PC-3 (cell line): ENCODE measurements at regions of chr6 and their contacts with region 1.

Region 1: GRCh38 chr6:70686548-70687133 is 19.0 kb downstream of the SMAP1 start:
- DNase-seq: peak; percentile 64
- ATAC-seq: 0 out of 2 replicates have a peak, but pooled peaks have one; percentile 35
- H3K4me3 ChIP-seq: no peak overlapping the region
- H3K27ac ChIP-seq: no peak overlapping the region
- H3K4me1 ChIP-seq: peaks cover 13% of the 10 kb centered on the region
- H3K27me3 ChIP-seq: no peaks in the 10 kb centered on the region
- CTCF ChIP-seq: peak; percentile 72

Region 2: GRCh38 chr6:70221025-70221714 is 465.5 kb before region 1 on chr6:
- CTCF ChIA-PET with region 1: interaction called, 4 read pairs
- POLR2A ChIA-PET with region 1: no interaction called
- intact Hi-C with region 1: loop called (anchors 5 kb)
- DNase-seq: peak; percentile 36
- ATAC-seq: no peak
- H3K4me3 ChIP-seq: no peak overlapping the region
- H3K27ac ChIP-seq: no peak overlapping the region
- H3K4me1 ChIP-seq: no peaks in the 10 kb centered on the region
- H3K27me3 ChIP-seq: peaks cover 15% of the 10 kb centered on the region
- CTCF ChIP-seq: peak; percentile 55

Region 3: GRCh38 chr6:70369332-70369950 is 317.2 kb before region 1 on chr6:
- CTCF ChIA-PET with region 1: no interaction called
- POLR2A ChIA-PET with region 1: no interaction called
- intact Hi-C with region 1: loop called (anchors 5 kb)
- DNase-seq: peak; percentile 76
- ATAC-seq: peak; percentile 67
- H3K4me3 ChIP-seq: no peak overlapping the region
- H3K27ac ChIP-seq: no peak overlapping the region
- H3K4me1 ChIP-seq: peaks cover 8% of the 10 kb centered on the region; the same call in 1 of the 2 replicates
- H3K27me3 ChIP-seq: peaks cover 38% of the 10 kb centered on the region
- CTCF ChIP-seq: peak; percentile 85

Region 4: GRCh38 chr6:70520575-70520974 is 166.1 kb before region 1 on chr6:
- CTCF ChIA-PET with region 1: interaction called, 8 read pairs
- POLR2A ChIA-PET with region 1: no interaction called
- intact Hi-C with region 1: loop called (anchors 1 kb)
- DNase-seq: peak; percentile 22
- ATAC-seq: peak; percentile 29; the same call in 1 of the 2 replicates
- H3K4me3 ChIP-seq: no peak overlapping the region
- H3K27ac ChIP-seq: no peak overlapping the region
- H3K4me1 ChIP-seq: no peaks in the 10 kb centered on the region
- H3K27me3 ChIP-seq: no peaks in the 10 kb centered on the region
- CTCF ChIP-seq: peak; percentile 55

Region 5: GRCh38 chr6:70566751-70567382 is 119.8 kb before region 1 on chr6 and contains the start of gene SDHAF4:
- CTCF ChIA-PET with region 1: no interaction called
- POLR2A ChIA-PET with region 1: no interaction called
- intact Hi-C with region 1: loop called (anchors 5 kb)
- DNase-seq: peak; percentile 84
- ATAC-seq: peak; percentile 96
- H3K4me3 ChIP-seq: peak within 1 kb of the TSS; percentile 85
- H3K27ac ChIP-seq: peak within 1 kb of the TSS; percentile 43
- H3K4me1 ChIP-seq: peaks cover 8% of the 10 kb centered on the region; the same call in 1 of the 2 replicates
- H3K27me3 ChIP-seq: no peaks in the 10 kb centered on the region
- CTCF ChIP-seq: no peak
- total RNA-seq, gene SDHAF4: 1.5 and 6.2 TPM in 2 replicates

Region 6: DNA sequence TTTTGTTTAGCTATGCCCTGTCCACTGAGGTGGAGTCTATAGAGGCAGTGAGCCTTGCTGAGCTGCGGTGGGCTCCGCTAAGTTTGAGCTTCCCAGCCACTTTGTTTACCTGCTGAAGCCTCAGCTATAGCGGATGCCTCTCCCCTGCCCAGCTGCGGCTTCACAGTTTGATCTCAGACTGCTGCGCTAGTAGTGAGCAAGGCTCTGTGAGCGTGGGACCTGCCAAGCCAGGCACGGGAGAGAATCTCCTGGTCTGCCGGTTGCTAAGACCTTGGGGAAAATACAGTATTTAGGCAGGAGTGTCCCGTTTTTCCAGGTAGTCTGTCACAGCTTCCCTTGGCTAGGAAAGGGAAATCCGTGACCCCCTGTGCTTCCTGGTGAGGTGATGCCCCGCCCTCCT is 119.4 kb after region 1 on chr6:
- CTCF ChIA-PET with region 1: no interaction called
- POLR2A ChIA-PET with region 1: no interaction called
- intact Hi-C with region 1: no loop called
- DNase-seq: no peak
- ATAC-seq: no peak
- H3K4me3 ChIP-seq: no peak overlapping the region
- H3K27ac ChIP-seq: no peak overlapping the region
- H3K4me1 ChIP-seq: no peaks in the 10 kb centered on the region
- H3K27me3 ChIP-seq: no peaks in the 10 kb centered on the region
- CTCF ChIP-seq: no peak